ENCODE measurements at regions of chr18 and their contacts with region 1.

Region 1: GRCh38 chr18:48445540-48445939 is 36.4 kb upstream of the ZBTB7C start:
- DNase-seq: peak; percentile 9
- ATAC-seq: peak; percentile 95
- H3K4me3 ChIP-seq: no peak overlapping the region
- H3K27ac ChIP-seq: no peak overlapping the region
- H3K4me1 ChIP-seq: no peaks in the 10 kb centered on the region
- H3K27me3 ChIP-seq: peaks cover 4% of the 10 kb centered on the region in 2 experiments; a peak in 3 of 4 replicates
- CTCF ChIP-seq: peak; percentile 64 to 96 (median 89)
- EP300 ChIP-seq: no peak
- POLR2A ChIP-seq: no peak
- RAD21 ChIP-seq: peak; percentile 70

Region 2: DNA sequence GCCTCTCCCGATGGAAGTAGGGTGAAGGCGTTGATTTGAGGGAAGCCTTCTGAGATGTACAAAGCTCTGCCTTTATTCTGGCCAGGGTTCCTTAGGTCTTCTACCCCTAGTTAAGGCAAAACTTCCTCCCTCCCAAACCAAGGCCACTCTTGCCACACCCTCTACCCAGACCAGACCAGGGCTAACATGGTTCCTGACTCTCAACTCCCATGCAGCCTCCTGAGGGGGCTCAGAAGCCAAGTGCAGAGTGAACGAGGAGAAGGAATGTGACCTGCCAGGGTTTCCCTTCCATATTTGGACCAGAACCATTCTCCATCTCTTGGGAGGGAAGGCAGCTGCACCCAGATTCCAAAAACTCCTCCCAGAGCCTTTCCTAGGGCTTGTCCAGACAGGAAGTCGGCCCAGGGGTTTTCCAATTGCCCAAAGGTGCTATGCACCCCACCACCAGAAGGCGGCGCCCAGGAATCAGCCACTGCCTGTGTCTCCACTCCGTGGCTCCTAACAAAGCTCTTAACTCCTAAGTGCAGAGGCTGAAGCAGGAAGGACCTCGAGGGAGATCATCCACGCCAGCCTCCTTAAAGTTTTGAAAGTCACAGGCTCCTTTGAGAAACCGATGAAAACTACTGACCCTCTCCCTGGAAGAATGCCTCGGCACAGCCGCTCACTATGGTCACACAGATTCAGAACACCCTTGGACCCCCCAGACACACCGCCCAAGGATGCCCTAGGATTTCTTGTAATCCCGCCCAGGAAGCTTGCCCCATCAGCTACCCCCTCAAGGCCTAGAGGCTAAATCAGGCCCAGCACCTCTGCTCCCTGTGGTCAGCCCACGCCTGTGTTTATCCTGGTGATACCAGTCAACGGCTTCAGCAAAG is 672.9 kb before region 1 on chr18:
- CTCF ChIA-PET with region 1: interaction called, 3 read pairs
- POLR2A ChIA-PET with region 1: no interaction called
- RAD21 ChIA-PET with region 1: interaction called, 3 read pairs
- SMC1A ChIA-PET with region 1: no interaction called
- in situ Hi-C with region 1: loop called (anchors 10 kb)
- intact Hi-C with region 1: loop called (anchors 5 kb)
- DNase-seq: no peak
- ATAC-seq: peak; percentile 87
- H3K4me3 ChIP-seq: no peak overlapping the region
- H3K27ac ChIP-seq: no peak overlapping the region
- H3K4me1 ChIP-seq: no peaks in the 10 kb centered on the region
- H3K27me3 ChIP-seq: no peaks in the 10 kb centered on the region
- CTCF ChIP-seq: peak; percentile 88 to 99 (median 91)
- EP300 ChIP-seq: no peak
- POLR2A ChIP-seq: no peak
- RAD21 ChIP-seq: peak; percentile 89

Region 3: DNA sequence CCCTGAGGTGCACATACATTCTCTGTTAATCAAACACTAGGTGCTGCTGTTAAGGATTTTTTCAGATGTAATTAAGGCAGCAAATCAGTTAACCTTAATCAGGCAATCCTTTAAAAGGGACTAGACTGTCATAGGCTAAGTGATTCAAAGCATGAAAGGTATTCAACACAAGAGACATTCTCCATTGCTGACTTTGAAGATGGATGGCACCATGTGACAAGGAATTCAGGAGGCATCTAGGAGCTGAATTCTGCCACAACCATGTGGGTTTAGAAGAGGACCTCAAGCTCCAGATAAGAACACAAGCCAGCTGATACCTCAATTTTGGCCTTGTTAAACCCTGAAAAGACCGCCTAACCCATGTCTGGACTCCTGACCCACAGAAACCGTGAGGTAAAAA is 599.1 kb before region 1 on chr18:
- CTCF ChIA-PET with region 1: no interaction called
- POLR2A ChIA-PET with region 1: no interaction called
- RAD21 ChIA-PET with region 1: no interaction called
- SMC1A ChIA-PET with region 1: no interaction called
- in situ Hi-C with region 1: no loop called
- intact Hi-C with region 1: no loop called
- DNase-seq: no peak
- ATAC-seq: no peak
- H3K4me3 ChIP-seq: no peak overlapping the region
- H3K27ac ChIP-seq: no peak overlapping the region
- H3K4me1 ChIP-seq: no peaks in the 10 kb centered on the region
- H3K27me3 ChIP-seq: no peaks in the 10 kb centered on the region
- CTCF ChIP-seq: no peak
- EP300 ChIP-seq: no peak
- POLR2A ChIP-seq: no peak
- RAD21 ChIP-seq: no peak

Region 4: DNA sequence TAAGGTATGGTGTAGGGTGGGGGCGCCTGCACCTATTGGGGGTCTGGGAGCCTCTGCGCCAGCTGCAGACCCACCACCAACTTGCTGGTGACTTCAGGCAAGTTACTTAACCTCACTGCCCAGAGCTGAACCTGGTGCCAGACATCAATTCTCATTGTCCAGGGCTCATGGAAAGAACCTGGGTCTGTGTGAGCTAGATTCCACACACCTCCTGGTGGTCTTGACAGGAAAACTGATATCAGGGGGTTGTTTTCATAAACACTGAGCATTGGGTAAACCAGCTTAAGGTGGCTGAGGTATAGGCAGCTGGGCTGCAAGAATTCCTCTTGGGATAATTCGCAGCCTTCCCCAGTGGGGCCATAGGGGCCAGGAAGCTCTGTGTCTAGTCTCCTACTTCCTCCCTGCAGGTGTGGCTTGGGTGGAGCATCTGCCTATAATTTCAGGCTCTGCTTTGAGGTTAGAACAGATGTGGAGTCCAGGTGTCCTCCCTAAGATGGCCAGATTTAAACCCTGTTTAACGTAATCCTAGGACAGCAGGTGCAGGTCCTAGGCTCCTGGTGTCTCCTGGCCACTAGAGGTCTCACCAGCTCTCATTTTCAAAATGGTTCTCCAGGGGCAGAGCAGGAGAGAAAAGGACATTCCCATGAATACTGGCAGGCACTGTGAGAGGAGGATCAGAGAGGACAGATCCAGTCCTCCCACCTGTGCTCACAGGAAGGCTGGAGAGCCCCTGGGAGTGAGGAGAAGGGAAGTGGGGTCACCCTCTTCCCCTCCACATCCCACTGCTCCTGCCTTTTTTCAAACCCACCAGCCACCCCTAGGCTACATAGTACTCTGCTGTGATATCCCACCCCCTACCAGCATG is 414.7 kb before region 1 on chr18:
- CTCF ChIA-PET with region 1: interaction called, 4 read pairs
- POLR2A ChIA-PET with region 1: no interaction called
- RAD21 ChIA-PET with region 1: no interaction called
- SMC1A ChIA-PET with region 1: no interaction called
- in situ Hi-C with region 1: loop called (anchors 5 kb)
- intact Hi-C with region 1: loop called (anchors 1 kb)
- DNase-seq: no peak
- ATAC-seq: peak; percentile 73
- H3K4me3 ChIP-seq: no peak overlapping the region
- H3K27ac ChIP-seq: no peak overlapping the region
- H3K4me1 ChIP-seq: no peaks in the 10 kb centered on the region
- H3K27me3 ChIP-seq: peaks cover 0 to 1% of the 10 kb centered on the region in 2 experiments; a peak in 2 of 4 replicates
- CTCF ChIP-seq: peak; percentile 57 to 73 (median 67)
- EP300 ChIP-seq: no peak
- POLR2A ChIP-seq: no peak
- RAD21 ChIP-seq: peak; percentile 61

Region 5: GRCh38 chr18:48230467-48231113 is 214.9 kb before region 1 on chr18:
- CTCF ChIA-PET with region 1: interaction called, 5 read pairs
- POLR2A ChIA-PET with region 1: no interaction called
- RAD21 ChIA-PET with region 1: no interaction called
- SMC1A ChIA-PET with region 1: no interaction called
- in situ Hi-C with region 1: no loop called
- intact Hi-C with region 1: loop called (anchors 1 kb)
- DNase-seq: no peak
- ATAC-seq: peak; percentile 80
- H3K4me3 ChIP-seq: no peak overlapping the region
- H3K27ac ChIP-seq: no peak overlapping the region
- H3K4me1 ChIP-seq: no peaks in the 10 kb centered on the region
- H3K27me3 ChIP-seq: no peaks in the 10 kb centered on the region; a peak in 1 of 4 replicates
- CTCF ChIP-seq: peak; percentile 45 to 54 (median 52); a peak in 5 of 6 replicates
- EP300 ChIP-seq: no peak
- POLR2A ChIP-seq: no peak
- RAD21 ChIP-seq: peak; percentile 53

Region 6: GRCh38 chr18:48460929-48461583 is 15.5 kb after region 1 on chr18:
- CTCF ChIA-PET with region 1: interaction called, 17 read pairs
- POLR2A ChIA-PET with region 1: no interaction called
- RAD21 ChIA-PET with region 1: no interaction called
- SMC1A ChIA-PET with region 1: no interaction called
- in situ Hi-C with region 1: no loop called
- intact Hi-C with region 1: no loop called
- DNase-seq: no peak
- ATAC-seq: no peak
- H3K4me3 ChIP-seq: no peak overlapping the region
- H3K27ac ChIP-seq: no peak overlapping the region
- H3K4me1 ChIP-seq: no peaks in the 10 kb centered on the region
- H3K27me3 ChIP-seq: no peaks in the 10 kb centered on the region; a peak in 1 of 4 replicates
- CTCF ChIP-seq: no peak
- EP300 ChIP-seq: no peak
- POLR2A ChIP-seq: no peak
- RAD21 ChIP-seq: no peak

Region 7: DNA sequence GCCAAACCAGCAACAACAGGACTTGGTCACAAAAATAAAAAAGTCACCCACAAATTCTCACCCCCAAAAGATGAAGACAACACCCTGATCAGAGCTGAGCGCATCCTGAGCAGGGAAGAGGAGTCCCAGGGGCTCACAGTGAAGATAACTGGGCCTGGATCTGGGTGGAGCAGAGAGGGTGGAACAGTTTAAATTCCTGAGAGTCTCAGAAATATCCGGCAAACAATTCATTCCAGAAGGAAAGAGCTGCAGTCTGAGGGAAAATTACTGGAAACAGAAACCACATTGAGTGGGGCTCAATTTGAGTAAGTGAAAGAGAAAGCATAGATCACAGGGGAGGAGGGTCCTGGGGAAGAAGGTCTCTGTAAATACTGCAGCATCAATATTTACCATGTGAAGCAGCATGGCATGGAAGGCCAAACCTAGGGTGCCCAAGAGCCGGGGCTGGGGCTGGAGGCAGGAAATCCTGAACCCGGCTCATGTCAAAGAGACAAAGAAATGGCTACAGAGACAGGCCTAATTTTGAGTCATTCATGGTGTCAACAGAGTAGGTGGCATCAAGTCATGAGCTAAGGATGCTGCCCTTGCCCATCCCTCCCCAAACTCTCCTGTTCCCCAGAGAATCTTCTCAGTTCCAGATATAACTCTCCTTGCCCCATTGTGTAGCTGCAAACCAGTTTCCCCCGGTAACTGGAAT is 25.1 kb after region 1 on chr18:
- CTCF ChIA-PET with region 1: interaction called, 11 read pairs
- POLR2A ChIA-PET with region 1: no interaction called
- RAD21 ChIA-PET with region 1: interaction called, 3 read pairs
- SMC1A ChIA-PET with region 1: interaction called, 4 read pairs
- in situ Hi-C with region 1: no loop called
- intact Hi-C with region 1: no loop called
- DNase-seq: no peak
- ATAC-seq: no peak
- H3K4me3 ChIP-seq: no peak overlapping the region
- H3K27ac ChIP-seq: no peak overlapping the region
- H3K4me1 ChIP-seq: no peaks in the 10 kb centered on the region
- H3K27me3 ChIP-seq: peaks cover 0 to 2% of the 10 kb centered on the region in 2 experiments; a peak in 2 of 4 replicates
- CTCF ChIP-seq: no peak
- EP300 ChIP-seq: no peak
- POLR2A ChIP-seq: no peak
- RAD21 ChIP-seq: no peak

Region 8: GRCh38 chr18:48663931-48664847 is 218.6 kb after region 1 on chr18:
- CTCF ChIA-PET with region 1: interaction called, 6 read pairs
- POLR2A ChIA-PET with region 1: no interaction called
- RAD21 ChIA-PET with region 1: no interaction called
- SMC1A ChIA-PET with region 1: no interaction called
- in situ Hi-C with region 1: no loop called
- intact Hi-C with region 1: loop called (anchors 1 kb)
- DNase-seq: no peak
- ATAC-seq: peak; percentile 57
- H3K4me3 ChIP-seq: no peak overlapping the region
- H3K27ac ChIP-seq: no peak overlapping the region
- H3K4me1 ChIP-seq: no peaks in the 10 kb centered on the region
- H3K27me3 ChIP-seq: no peaks in the 10 kb centered on the region; a peak in 1 of 4 replicates
- CTCF ChIP-seq: peak; percentile 84 to 97 (median 88)
- EP300 ChIP-seq: no peak
- POLR2A ChIP-seq: no peak
- RAD21 ChIP-seq: peak; percentile 79

Region 9: GRCh38 chr18:49250816-49251388 is 805.4 kb after region 1 on chr18:
- CTCF ChIA-PET with region 1: no interaction called
- POLR2A ChIA-PET with region 1: no interaction called
- RAD21 ChIA-PET with region 1: no interaction called
- SMC1A ChIA-PET with region 1: no interaction called
- in situ Hi-C with region 1: no loop called
- intact Hi-C with region 1: no loop called
- DNase-seq: no peak
- ATAC-seq: peak; percentile 56
- H3K4me3 ChIP-seq: no peak overlapping the region
- H3K27ac ChIP-seq: no peak overlapping the region
- H3K4me1 ChIP-seq: no peaks in the 10 kb centered on the region
- H3K27me3 ChIP-seq: no peaks in the 10 kb centered on the region
- CTCF ChIP-seq: peak; percentile 24 to 41 (median 34); a peak in 4 of 6 replicates
- EP300 ChIP-seq: no peak
- POLR2A ChIP-seq: no peak
- RAD21 ChIP-seq: peak; percentile 62